Mammary epithelial cell (primary cell): ENCODE measurements at regions of chr12 and their contacts with region 1.

Region 1: GRCh38 chr12:48758221-48758620 is 30.7 kb downstream of the ADCY6 start:
- DNase-seq: no peak
- H3K4me3 ChIP-seq: no peak overlapping the region
- H3K27ac ChIP-seq: no peak overlapping the region
- H3K4me1 ChIP-seq: no peaks in the 10 kb centered on the region
- H3K27me3 ChIP-seq: no peaks in the 10 kb centered on the region
- CTCF ChIP-seq: no peak

Region 2: GRCh38 chr12:48788854-48789796 is 30.9 kb after region 1 on chr12 and contains the start of gene ADCY6:
- CTCF ChIA-PET with region 1: interaction called, 13 read pairs
- dilution Hi-C with region 1: no loop called
- in situ Hi-C with region 1: no loop called
- intact Hi-C with region 1: no loop called
- DNase-seq: peak; percentile 47
- H3K4me3 ChIP-seq: peak within 1 kb of the TSS; percentile 79 to 97 (median 90)
- H3K27ac ChIP-seq: peak within 1 kb of the TSS; percentile 49
- H3K4me1 ChIP-seq: peaks cover 10% of the 10 kb centered on the region
- H3K27me3 ChIP-seq: no peaks in the 10 kb centered on the region
- CTCF ChIP-seq: no peak
- total RNA-seq, gene ADCY6: 30.5 to 42.2 TPM